PC-9 (cell line): ENCODE measurements at regions of chr4 and their contacts with region 1.

Region 1: DNA sequence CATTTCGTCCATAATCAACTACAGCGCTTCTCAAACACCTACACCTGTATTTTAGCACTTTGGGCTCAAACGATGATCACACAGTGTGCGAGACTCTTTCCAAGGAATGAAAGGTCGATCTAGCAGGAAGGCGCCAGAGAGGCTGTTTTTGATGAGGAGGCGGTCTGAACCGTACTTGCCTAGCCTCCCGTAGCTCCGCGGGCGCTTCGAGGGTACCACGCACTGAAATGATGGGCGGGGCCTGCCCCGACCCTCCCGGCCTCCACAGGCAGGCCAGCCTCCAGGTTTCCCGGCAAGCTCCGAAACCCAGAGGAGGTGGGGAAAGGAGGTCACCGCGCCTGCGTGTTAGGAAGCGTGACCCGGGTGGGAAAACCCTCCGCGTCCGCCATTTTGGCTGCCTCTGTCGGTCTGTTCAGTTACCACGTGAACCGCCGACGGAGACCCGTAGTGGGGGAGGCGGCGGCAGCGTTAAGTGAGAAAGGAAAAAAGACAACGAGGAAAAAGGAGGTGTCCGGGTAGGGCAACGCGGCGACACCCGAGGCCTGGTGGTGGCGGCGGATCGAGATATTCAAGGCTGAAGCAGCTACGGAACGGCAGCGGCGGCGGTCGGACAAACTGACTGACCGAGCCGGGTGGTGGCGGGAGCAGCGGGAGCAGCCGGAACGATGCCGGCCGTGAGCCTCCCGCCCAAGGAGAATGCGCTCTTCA is at the start of gene NAA15:
- DNase-seq: peak; percentile 87 to 97
- H3K4me3 ChIP-seq: peak within 1 kb of the TSS; percentile 74
- H3K27ac ChIP-seq: peak within 1 kb of the TSS; percentile 83
- H3K4me1 ChIP-seq: peaks cover 24% of the 10 kb centered on the region
- H3K27me3 ChIP-seq: no peaks in the 10 kb centered on the region
- CTCF ChIP-seq: no peak
- total RNA-seq, gene NAA15: 43.8 and 51.7 TPM in 2 replicates

Region 2: DNA sequence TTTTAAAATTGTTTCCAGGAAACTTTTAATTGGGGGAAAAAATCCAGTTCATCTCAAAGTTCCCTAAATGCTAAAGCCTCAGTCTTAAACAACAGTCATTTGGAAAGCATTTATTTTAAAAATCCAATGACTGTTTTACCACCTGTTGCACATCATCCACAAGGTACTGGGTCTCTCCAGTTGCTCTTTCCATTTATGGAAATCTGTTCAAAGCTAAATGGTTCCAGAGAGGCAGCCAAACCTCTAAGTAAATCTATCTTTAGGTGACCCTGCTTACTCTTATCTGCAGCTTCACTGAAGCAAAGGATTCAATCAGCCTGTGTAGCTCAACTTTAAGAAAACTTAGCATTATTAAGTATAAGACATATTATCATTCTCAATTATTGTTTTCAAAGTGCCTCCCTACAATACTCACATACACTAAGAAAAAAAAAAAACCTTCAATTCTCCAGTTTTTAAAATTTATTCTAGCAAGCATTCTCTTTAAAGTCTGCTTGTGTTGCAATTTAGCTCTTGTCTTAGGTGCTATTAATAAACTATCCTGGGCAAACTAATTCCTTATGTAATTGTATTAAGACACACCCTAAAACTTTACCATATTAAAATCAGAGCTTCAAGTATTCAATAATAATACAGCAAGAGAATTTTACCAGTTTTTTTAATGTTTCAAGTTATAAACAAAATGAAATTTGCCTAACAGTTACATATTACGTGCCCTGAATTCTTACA is 225.1 kb before region 1 on chr4:
- CTCF ChIA-PET with region 1: no interaction called
- POLR2A ChIA-PET with region 1: no interaction called
- intact Hi-C with region 1: no loop called
- DNase-seq: no peak
- H3K4me3 ChIP-seq: no peak overlapping the region
- H3K27ac ChIP-seq: no peak overlapping the region
- H3K4me1 ChIP-seq: peaks cover 4% of the 10 kb centered on the region; the same call in 1 of the 2 replicates
- H3K27me3 ChIP-seq: no peaks in the 10 kb centered on the region
- CTCF ChIP-seq: no peak

Region 3: DNA sequence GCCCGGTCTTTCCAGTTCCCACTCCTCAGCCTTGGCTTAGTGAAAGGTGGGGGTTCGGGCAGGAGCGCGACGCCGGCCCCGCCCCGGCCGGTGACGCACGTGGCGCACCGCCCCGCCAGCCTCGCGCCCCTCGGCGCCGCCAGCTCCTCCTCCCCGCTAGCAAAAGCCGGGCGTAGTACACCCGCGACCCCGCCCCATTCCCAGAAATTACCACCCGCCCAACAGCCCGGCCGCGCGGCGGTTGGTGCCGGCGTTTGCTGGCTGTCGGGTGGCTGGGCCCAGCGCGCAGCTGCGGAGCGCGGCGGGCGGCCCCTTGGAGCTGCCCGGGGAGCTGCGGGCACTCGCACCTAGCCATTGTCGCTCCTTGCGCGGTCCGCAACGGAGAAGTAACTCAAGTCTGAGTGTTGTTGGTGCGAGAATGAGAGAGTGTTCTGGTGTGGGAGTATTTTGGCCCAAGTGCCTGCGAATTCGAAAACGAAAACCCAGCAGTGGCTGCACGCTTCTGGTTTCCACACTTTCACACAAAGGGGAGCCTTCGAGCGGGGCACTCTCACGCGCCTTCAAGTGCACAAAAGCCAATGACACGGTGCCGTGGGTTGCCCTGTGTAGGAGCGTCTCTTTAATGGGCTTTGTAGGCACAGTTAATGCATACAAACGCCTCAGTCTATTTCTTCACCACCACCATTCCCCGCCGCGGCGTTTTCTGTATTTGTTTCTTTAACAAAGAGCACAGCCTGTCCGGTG is 123.2 kb before region 1 on chr4:
- CTCF ChIA-PET with region 1: no interaction called
- POLR2A ChIA-PET with region 1: interaction called, 9 read pairs
- intact Hi-C with region 1: loop called (anchors 1 kb)
- DNase-seq: peak; percentile 69 to 97
- H3K4me3 ChIP-seq: peak overlapping the region; percentile 83
- H3K27ac ChIP-seq: peak overlapping the region; percentile 21
- H3K4me1 ChIP-seq: peaks cover 11% of the 10 kb centered on the region
- H3K27me3 ChIP-seq: no peaks in the 10 kb centered on the region
- CTCF ChIP-seq: no peak

Region 4: GRCh38 chr4:139282065-139282720 is 19.1 kb before region 1 on chr4:
- CTCF ChIA-PET with region 1: interaction called, 3 read pairs
- POLR2A ChIA-PET with region 1: interaction called, 10 read pairs
- intact Hi-C with region 1: no loop called
- DNase-seq: no peak
- H3K4me3 ChIP-seq: no peak overlapping the region
- H3K27ac ChIP-seq: no peak overlapping the region
- H3K4me1 ChIP-seq: no peaks in the 10 kb centered on the region
- H3K27me3 ChIP-seq: no peaks in the 10 kb centered on the region
- CTCF ChIP-seq: no peak